ENCODE measurements at regions of chr2 and their contacts with region 1.

Region 1: GRCh38 chr2:10302479-10303180 is at the start of gene HPCAL1:
- DNase-seq: peak; percentile 92
- H3K4me3 ChIP-seq: peak within 1 kb of the TSS; percentile 74
- H3K27ac ChIP-seq: peak within 1 kb of the TSS; percentile 41
- H3K4me1 ChIP-seq: peaks cover 25% of the 10 kb centered on the region
- CTCF ChIP-seq: peak; percentile 64
- total RNA-seq, gene HPCAL1: 9.1 and 9.7 TPM in 2 replicates

Region 2: DNA sequence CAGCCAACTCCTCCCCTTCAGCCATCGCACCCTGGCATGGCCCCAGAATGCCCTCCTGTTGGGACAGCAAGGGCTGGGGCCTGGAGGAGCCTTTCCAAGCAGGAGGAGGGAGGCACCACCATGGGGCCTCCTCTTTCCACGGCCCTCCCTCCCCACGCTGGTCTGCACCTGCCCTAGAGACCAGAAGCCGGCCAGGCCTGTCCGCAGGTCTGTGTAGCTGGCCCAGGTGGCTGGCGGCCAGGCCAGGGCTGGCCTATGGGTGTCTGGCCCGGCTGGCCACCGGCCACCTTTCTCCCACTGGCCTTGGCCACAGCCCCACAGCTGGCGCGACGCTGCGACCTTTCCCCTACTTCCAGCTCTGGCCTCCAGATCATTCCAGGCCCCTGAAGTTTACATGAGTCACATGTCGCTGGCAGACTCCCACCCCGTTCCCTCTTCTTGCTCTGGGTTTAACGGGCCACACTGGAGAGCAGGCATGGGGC is 292.8 kb before region 1 on chr2:
- CTCF ChIA-PET with region 1: no interaction called
- POLR2A ChIA-PET with region 1: no interaction called
- intact Hi-C with region 1: no loop called
- DNase-seq: no peak
- H3K4me3 ChIP-seq: no peak overlapping the region
- H3K27ac ChIP-seq: no peak overlapping the region
- H3K4me1 ChIP-seq: no peaks in the 10 kb centered on the region
- CTCF ChIP-seq: no peak

Region 3: DNA sequence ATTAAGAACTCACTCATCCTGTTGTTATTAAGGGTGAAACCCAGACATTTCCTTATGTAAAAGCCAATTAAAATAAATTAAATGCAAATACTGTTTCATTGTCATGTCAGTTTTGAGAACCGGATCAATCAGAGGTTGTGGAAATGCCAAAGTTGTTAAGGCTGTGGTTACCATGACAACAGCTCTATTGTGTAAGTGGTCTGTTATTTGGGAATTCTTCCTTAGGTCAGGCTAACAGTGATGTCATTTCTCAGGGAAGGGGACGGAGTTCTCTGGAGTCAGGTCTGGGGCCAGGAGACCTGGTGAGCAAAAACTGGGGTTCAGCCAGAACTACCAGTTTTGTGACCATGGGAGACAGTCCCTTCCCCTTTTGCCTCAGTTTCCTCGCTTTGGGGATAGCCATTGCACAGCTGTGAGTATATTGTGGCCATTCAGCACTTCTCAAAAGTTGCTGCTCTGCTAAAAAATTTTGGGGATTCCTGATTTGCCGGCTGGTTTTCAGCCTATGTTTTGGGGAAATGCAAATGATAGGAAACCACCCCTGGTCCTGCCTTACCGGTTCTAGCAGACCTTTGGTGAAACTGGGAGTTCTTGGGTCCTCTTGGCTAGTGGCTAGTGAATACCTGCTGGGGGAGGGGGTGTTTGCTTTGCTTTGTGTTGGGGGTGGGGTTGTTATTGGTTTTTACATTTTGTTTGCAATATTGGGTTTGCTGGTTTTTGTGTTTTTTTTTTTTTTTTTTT is 21.6 kb after region 1 on chr2:
- CTCF ChIA-PET with region 1: interaction called, 3 read pairs
- POLR2A ChIA-PET with region 1: interaction called, 11 read pairs
- intact Hi-C with region 1: loop called (anchors 2 kb)
- DNase-seq: no peak
- H3K4me3 ChIP-seq: no peak overlapping the region
- H3K27ac ChIP-seq: no peak overlapping the region
- H3K4me1 ChIP-seq: peaks cover 56% of the 10 kb centered on the region
- CTCF ChIP-seq: no peak

Measured in OCI-LY7 (cell line).